Naive thymus-derived CD8-positive, alpha-beta T cell (primary cell): ENCODE measurements at regions of chr17 and their contacts with region 1.

Region 1: GRCh38 chr17:35046740-35047283 is 16.7 kb downstream of the RFFL start:
- DNase-seq: peak in 9 of 10 donors; percentile 41 to 77 (median 70)
- ATAC-seq: peak; percentile 68 to 71
- H3K4me3 Mint-ChIP-seq: peak overlapping the region; percentile 70 to 91 (median 81)
- H3K27ac Mint-ChIP-seq: peak overlapping the region; percentile 92 to 99 (median 96)
- H3K4me1 Mint-ChIP-seq: peaks cover 33 to 82% (median 75%) of the 10 kb centered on the region in 4 donors
- H3K27me3 Mint-ChIP-seq: no peaks in the 10 kb centered on the region

Region 2: DNA sequence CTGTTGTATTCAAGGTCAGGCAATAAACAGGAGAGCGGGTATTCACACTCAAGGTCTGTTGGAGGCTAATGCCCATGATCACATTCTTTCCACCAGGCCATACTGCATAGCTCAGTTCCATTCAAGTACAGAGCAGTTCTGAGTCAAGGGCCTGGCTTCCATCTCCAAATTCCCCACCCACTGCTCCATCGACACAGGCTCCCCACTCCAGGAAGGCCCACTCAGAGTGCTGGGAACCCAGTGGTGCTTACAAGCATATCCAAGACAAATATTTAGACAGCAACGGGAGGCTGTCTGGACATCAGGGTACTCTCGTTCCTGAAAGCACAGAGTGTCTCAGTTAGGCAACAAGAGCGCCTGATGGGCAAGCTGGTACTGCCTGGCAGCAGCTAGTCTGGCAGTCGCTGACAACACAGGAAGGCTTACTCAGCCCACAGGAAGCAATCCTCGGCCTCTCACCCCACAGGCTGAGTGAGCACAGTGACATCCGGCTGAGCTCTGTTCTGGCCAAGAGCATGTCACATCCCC is 24.2 kb before region 1 on chr17:
- POLR2A ChIA-PET with region 1: interaction called, 26 read pairs
- DNase-seq: peak; percentile 23 to 77 (median 50)
- ATAC-seq: peak; percentile 98 to 100
- H3K4me3 Mint-ChIP-seq: peak overlapping the region; percentile 36 to 79 (median 68)
- H3K27ac Mint-ChIP-seq: peak overlapping the region; percentile 94 to 99 (median 96)
- H3K4me1 Mint-ChIP-seq: peaks cover 15 to 60% (median 50%) of the 10 kb centered on the region in 4 donors
- H3K27me3 Mint-ChIP-seq: no peaks in the 10 kb centered on the region

Region 3: GRCh38 chr17:35141681-35142466 is 95.1 kb after region 1 on chr17 and contains the start of gene NLE1:
- POLR2A ChIA-PET with region 1: no interaction called
- DNase-seq: peak; percentile 77 to 93 (median 88)
- ATAC-seq: peak; percentile 95 to 96
- H3K4me3 Mint-ChIP-seq: peak within 1 kb of the TSS; percentile 76 to 92 (median 84)
- H3K27ac Mint-ChIP-seq: peak within 1 kb of the TSS; percentile 51 to 94 (median 88)
- H3K4me1 Mint-ChIP-seq: peaks cover 5 to 26% (median 15%) of the 10 kb centered on the region in 4 donors
- H3K27me3 Mint-ChIP-seq: no peaks in the 10 kb centered on the region
- polyA plus RNA-seq, gene NLE1: 4.6 to 6.4 (median 5.3) TPM

Region 4: DNA sequence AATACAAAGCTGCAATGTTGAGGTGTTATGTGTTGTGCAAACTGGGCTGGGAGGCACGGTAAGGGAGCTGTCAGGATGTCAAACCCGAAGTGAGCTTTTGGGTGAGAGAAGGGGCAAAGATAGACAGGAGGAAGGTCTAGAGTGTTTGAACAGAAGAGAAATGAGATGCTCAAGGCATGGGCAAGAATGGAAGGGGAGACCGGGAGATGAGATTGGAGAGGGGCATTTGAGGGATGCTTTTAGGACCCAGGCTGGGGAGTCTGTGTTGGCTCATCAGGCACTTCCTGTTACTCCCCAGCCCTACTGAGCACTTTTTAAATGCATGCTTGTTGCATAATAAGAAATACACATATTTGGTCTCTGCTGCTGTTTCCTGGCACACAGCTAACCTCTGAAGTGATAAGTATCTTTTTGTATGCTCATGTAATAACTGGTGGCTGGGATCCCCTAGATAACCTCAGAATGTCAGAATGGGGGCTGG is 114.5 kb after region 1 on chr17:
- POLR2A ChIA-PET with region 1: no interaction called
- DNase-seq: peak in 4 of 10 donors; percentile 28 to 58 (median 43)
- ATAC-seq: peak; percentile 50 to 64
- H3K4me3 Mint-ChIP-seq: peak overlapping the region; percentile 63 to 83 (median 76)
- H3K27ac Mint-ChIP-seq: peak overlapping the region; percentile 85 to 98 (median 94)
- H3K4me1 Mint-ChIP-seq: peaks cover 35 to 65% (median 54%) of the 10 kb centered on the region in 4 donors
- H3K27me3 Mint-ChIP-seq: no peaks in the 10 kb centered on the region